Endothelial cell of umbilical vein (primary cell): ENCODE measurements at regions of chr2 and their contacts with region 1.

Region 1: DNA sequence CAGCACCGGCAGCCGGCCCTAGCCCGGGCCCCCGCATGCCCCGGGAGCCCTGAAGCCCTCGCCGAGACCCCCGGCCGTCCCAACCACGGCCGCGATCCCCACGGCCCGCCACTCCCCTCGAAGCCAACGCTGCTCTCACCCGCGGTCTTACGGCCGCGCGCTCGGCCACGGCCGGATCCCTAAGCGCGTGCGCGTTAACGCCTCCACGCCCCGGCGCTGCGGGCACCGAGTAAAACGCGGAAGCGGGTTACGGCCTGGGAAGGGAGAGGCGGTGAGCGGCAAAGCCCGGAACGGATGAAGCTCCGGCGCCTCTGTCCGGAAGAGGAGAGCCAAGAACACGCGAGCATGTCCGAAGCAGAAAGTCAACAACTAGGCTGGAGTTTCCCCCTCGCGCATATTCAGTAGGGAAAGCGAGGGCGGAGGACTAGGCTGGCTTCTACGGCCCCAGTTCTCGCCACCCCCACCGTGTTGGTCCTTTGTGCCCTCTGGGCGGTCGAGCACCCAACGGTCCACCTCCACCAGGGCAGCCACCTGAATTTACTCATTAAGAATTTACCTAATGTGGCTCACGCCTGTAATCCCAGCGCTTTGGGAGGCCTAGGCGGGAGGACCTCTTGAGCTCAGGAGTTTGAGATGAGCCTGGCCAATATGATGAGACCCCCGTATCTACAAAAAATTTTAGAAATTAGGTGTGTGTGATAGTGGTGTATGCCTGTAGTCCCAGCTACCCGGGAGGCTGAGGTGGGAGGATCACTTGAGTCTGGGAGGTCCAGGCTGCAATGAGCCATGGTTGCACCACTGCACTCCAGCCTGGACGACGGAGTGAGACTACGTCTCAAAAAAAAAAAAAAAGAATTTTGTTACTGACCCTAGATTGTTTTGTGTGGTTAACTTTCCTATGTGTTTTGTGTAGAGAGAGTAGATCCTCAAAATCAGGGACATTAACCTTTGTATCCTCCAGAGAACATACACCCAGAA is at the start of gene KANSL3:
- DNase-seq: peak; percentile 91
- H3K4me3 ChIP-seq: peak within 1 kb of the TSS; percentile 70 to 92 (median 91)
- H3K27ac ChIP-seq: peak within 1 kb of the TSS; percentile 92
- H3K4me1 ChIP-seq: peaks cover 19% of the 10 kb centered on the region
- H3K27me3 ChIP-seq: no peaks in the 10 kb centered on the region
- CTCF ChIP-seq: no peak
- POLR2A ChIP-seq: peak; percentile 92
- total RNA-seq, gene KANSL3: 36.9 and 37.4 TPM in 2 replicates

Region 2: DNA sequence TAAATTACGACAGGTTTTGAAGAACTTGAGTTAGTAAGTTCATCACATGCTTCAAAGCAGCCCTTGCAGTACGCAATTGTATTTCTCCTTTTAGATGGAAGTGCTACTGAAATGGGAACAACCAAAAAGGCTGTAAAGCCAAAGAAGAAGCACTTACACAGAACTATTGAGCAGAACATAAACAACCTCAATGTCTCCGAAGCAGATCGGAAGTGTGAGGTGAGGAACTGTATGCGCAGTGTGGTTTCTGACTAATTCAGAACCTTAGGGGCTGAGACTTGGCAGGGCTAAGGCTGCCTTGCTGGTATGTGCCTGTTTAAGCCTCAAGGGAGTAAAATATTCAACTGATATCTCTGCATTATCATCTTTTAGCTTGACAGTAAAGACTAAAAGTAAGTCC is 294.4 kb before region 1 on chr2:
- CTCF ChIA-PET with region 1: no interaction called
- POLR2A ChIA-PET with region 1: no interaction called
- dilution Hi-C with region 1: no loop called
- intact Hi-C with region 1: no loop called
- DNase-seq: no peak
- H3K4me3 ChIP-seq: no peak overlapping the region
- H3K27ac ChIP-seq: no peak overlapping the region
- H3K4me1 ChIP-seq: no peaks in the 10 kb centered on the region
- H3K27me3 ChIP-seq: no peaks in the 10 kb centered on the region
- CTCF ChIP-seq: no peak
- POLR2A ChIP-seq: no peak

Region 3: GRCh38 chr2:96536445-96537065 is 101.9 kb before region 1 on chr2 and contains the start of gene ARID5A:
- CTCF ChIA-PET with region 1: no interaction called
- POLR2A ChIA-PET with region 1: no interaction called
- dilution Hi-C with region 1: no loop called
- intact Hi-C with region 1: loop called (anchors 2 kb)
- DNase-seq: peak; percentile 88
- H3K4me3 ChIP-seq: peak within 1 kb of the TSS; percentile 38 to 77 (median 56)
- H3K27ac ChIP-seq: peak within 1 kb of the TSS; percentile 67
- H3K4me1 ChIP-seq: peaks cover 30% of the 10 kb centered on the region
- H3K27me3 ChIP-seq: no peaks in the 10 kb centered on the region
- CTCF ChIP-seq: peak in 1 of 2 donors; percentile 31
- POLR2A ChIP-seq: peak; percentile 85
- total RNA-seq, gene ARID5A: 24.7 and 29.0 TPM in 2 replicates

Region 4: GRCh38 chr2:96739633-96740428 is 101.4 kb after region 1 on chr2 and contains the start of gene LMAN2L:
- CTCF ChIA-PET with region 1: no interaction called
- POLR2A ChIA-PET with region 1: no interaction called
- dilution Hi-C with region 1: no loop called
- intact Hi-C with region 1: loop called (anchors 1 kb)
- DNase-seq: peak; percentile 98
- H3K4me3 ChIP-seq: peak within 1 kb of the TSS; percentile 76 to 91 (median 84)
- H3K27ac ChIP-seq: peak within 1 kb of the TSS; percentile 58
- H3K4me1 ChIP-seq: peaks cover 16% of the 10 kb centered on the region
- H3K27me3 ChIP-seq: peaks cover 0 to 2% of the 10 kb centered on the region in 2 experiments
- CTCF ChIP-seq: no peak
- POLR2A ChIP-seq: peak; percentile 85
- total RNA-seq, gene LMAN2L: 15.4 and 18.2 TPM in 2 replicates

Region 5: GRCh38 chr2:96773922-96774321 is 135.5 kb after region 1 on chr2:
- CTCF ChIA-PET with region 1: no interaction called
- POLR2A ChIA-PET with region 1: no interaction called
- dilution Hi-C with region 1: no loop called
- intact Hi-C with region 1: no loop called
- DNase-seq: no peak
- H3K4me3 ChIP-seq: no peak overlapping the region
- H3K27ac ChIP-seq: no peak overlapping the region
- H3K4me1 ChIP-seq: no peaks in the 10 kb centered on the region
- H3K27me3 ChIP-seq: no peaks in the 10 kb centered on the region
- CTCF ChIP-seq: no peak
- POLR2A ChIP-seq: no peak

Region 6: DNA sequence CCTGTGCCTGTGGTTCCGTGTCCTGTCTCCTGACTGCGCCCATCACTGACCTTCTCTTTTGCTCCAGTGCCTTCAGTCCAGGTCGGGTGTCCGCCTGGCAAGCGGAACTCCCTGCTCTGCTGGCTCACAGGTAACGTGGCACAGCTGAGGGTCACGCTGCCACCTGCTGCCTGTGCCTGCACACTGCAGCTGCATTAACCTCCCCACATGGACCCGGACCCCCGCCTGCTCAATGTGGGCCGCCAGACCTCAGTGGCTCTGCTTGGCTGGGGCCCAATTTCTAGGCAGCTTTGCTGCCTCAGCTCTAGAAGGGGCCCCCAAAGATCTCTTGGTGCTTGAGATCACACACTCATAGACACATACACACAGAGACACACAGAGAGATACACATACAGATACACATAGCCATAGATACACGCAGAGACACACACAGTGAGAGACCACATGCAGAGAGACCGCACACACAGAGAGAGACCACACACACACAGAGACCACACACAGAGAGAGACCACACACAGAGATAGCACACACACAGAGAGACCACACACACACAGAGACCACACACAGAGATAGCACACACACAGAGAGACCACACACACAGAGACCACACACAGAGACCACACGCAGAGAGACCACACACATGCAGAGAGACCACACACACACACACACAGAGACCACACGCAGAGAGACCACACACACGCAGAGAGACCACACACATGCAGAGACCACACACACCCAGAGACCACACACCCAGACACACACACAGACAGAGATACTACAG is 162.8 kb after region 1 on chr2:
- CTCF ChIA-PET with region 1: no interaction called
- POLR2A ChIA-PET with region 1: no interaction called
- dilution Hi-C with region 1: no loop called
- intact Hi-C with region 1: loop called (anchors 5 kb)
- DNase-seq: peak; percentile 55
- H3K4me3 ChIP-seq: no peak overlapping the region
- H3K27ac ChIP-seq: no peak overlapping the region
- H3K4me1 ChIP-seq: no peaks in the 10 kb centered on the region
- H3K27me3 ChIP-seq: no peaks in the 10 kb centered on the region
- CTCF ChIP-seq: peak; percentile 79 to 90
- POLR2A ChIP-seq: no peak

Region 7: DNA sequence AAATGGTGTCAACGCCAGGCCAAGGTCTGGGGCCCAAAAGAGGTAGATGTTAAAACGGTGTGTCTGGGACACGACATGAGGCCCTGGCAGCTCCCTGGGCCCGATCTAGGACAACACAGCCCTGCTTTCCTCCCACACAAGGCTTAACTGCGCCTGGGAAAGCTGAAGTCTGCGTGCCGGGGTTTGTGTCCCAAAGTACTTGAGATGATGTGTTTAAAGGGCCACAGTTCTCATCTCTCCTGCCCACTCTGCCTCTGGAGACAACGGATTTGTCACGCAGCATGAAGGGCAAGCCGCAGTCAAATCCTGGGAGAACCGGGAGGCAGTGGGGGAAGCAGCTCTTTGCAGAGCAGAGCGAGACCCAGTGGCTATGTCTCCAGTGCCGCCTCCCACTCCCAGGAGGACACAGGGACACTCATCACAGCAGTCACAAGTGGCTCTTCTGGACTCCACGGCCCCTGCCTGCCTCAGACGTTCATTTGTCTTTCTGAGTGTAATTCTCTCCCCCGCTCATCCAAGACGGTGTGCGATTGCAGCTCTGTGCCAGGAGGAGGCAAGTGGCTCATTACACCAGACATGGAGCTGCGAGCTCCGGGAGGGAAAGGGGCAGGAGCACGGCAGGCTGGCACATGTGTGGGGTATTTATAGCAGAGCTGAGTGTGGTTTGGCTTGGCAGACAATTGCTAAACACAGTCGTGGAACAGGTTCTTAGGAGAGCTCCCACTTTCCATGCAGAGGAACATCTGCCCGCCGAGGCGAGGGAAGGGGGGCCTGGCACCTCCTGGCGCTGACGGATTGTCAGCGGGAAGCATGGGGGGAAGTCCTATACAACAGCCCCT is 289.2 kb after region 1 on chr2:
- CTCF ChIA-PET with region 1: no interaction called
- POLR2A ChIA-PET with region 1: no interaction called
- dilution Hi-C with region 1: no loop called
- intact Hi-C with region 1: no loop called
- DNase-seq: no peak
- H3K4me3 ChIP-seq: no peak overlapping the region
- H3K27ac ChIP-seq: no peak overlapping the region
- H3K4me1 ChIP-seq: no peaks in the 10 kb centered on the region
- H3K27me3 ChIP-seq: peaks cover 4 to 10% of the 10 kb centered on the region in 2 experiments
- CTCF ChIP-seq: no peak
- POLR2A ChIP-seq: no peak

Region 8: GRCh38 chr2:96960153-96960961 is 321.9 kb after region 1 on chr2:
- CTCF ChIA-PET with region 1: no interaction called
- POLR2A ChIA-PET with region 1: no interaction called
- dilution Hi-C with region 1: no loop called
- intact Hi-C with region 1: loop called (anchors 10 kb)
- DNase-seq: peak; percentile 73
- H3K4me3 ChIP-seq: no peak overlapping the region
- H3K27ac ChIP-seq: no peak overlapping the region
- H3K4me1 ChIP-seq: no peaks in the 10 kb centered on the region
- H3K27me3 ChIP-seq: no peaks in the 10 kb centered on the region
- CTCF ChIP-seq: peak; percentile 76 to 96
- POLR2A ChIP-seq: no peak

Region 9: DNA sequence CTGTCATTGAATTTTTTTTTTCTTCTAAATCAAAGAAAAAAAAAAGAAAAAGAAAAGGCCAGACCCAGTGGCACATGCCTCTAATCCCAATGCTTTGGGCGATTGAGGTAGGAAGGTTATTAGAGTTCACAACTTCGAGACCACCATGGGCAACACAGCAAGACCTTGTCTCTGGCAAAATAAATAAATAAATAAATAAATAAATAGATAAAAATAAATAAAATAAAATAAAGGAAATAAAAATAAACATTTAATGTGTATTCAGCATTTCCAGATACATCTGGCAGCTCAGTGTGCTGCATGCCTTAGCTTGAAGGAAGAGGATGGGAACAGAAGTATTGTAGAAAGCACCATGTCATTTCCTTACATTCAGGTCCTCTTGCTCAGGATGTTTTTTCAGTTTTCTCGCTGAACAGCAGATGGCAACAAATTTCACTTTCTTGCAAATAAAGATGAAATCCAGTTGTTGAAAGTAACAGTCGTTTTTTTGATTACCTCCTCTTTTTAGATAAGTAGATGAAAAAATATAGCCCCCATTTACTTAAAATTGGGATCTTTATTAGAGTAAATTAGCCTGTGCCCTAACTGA is 373.6 kb after region 1 on chr2:
- CTCF ChIA-PET with region 1: no interaction called
- POLR2A ChIA-PET with region 1: no interaction called
- dilution Hi-C with region 1: no loop called
- intact Hi-C with region 1: no loop called
- DNase-seq: peak; percentile 72
- H3K4me3 ChIP-seq: no peak overlapping the region
- H3K27ac ChIP-seq: no peak overlapping the region
- H3K4me1 ChIP-seq: no peaks in the 10 kb centered on the region
- H3K27me3 ChIP-seq: peaks cover 8% of the 10 kb centered on the region in 2 experiments
- CTCF ChIP-seq: peak in 1 of 2 donors; percentile 31
- POLR2A ChIP-seq: no peak